K562 (cell line): ENCODE measurements at regions of chr5 and their contacts with region 1.

Region 1: DNA sequence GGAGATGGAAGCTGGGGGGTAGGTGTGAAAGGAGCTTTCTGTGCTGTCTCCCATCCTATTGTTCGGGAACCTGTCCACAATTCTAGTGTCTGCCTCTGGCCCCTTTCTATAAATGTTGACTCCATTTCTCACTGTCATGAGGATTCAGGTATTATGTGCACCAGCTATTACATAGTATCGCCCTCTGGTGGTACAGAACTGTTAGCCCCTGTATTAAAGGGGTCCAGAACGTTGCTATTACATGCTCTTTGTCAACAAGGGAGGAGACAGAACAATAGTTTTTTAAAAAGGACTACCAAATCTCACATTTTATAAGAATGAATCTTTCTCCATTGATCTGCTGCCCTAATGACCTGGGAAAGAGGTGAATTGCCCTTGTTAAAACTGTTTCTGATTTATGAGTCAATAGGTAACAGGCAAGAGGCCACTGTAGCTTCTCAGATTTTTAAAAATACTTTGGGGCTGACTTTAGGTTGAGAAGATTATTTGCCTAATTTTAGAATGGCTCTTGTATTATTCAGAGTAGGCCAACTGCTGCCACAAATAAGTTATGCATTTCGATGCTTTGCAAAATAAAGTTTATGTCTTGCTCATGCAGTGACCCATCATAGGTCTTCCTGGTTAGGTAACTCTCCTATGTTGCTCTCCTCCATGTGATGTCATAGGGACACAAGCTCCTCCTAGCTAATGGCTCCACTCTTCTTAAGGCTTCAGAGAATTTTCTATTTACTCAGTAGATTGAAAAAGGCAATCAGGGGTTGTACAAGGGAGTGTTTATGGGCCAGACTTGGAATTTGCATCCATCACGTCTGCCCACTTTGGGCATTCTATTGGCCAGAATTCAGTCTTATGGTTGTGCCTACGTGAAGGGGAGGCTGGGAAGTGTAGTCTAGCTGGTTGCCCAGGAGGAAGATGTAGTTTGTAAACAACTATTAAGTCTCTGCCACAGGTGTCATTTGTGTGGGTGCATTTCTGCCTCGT is 20.8 kb downstream of the DCANP1 start:
- DNase-seq: peak; percentile 59 to 73 (median 66)
- ATAC-seq: peak; percentile 99
- H3K4me3 ChIP-seq: no peak overlapping the region
- H3K27ac ChIP-seq: no peak overlapping the region
- H3K4me1 ChIP-seq: peaks cover 0 to 11% of the 10 kb centered on the region in 2 experiments; a peak in 3 of 5 replicates
- H3K27me3 ChIP-seq: no peaks in the 10 kb centered on the region
- CTCF ChIP-seq: peak; percentile 62 to 86 (median 81)
- EP300 ChIP-seq: no peak
- POLR2A ChIP-seq: no peak
- RAD21 ChIP-seq: peak; percentile 63 to 84

Region 2: DNA sequence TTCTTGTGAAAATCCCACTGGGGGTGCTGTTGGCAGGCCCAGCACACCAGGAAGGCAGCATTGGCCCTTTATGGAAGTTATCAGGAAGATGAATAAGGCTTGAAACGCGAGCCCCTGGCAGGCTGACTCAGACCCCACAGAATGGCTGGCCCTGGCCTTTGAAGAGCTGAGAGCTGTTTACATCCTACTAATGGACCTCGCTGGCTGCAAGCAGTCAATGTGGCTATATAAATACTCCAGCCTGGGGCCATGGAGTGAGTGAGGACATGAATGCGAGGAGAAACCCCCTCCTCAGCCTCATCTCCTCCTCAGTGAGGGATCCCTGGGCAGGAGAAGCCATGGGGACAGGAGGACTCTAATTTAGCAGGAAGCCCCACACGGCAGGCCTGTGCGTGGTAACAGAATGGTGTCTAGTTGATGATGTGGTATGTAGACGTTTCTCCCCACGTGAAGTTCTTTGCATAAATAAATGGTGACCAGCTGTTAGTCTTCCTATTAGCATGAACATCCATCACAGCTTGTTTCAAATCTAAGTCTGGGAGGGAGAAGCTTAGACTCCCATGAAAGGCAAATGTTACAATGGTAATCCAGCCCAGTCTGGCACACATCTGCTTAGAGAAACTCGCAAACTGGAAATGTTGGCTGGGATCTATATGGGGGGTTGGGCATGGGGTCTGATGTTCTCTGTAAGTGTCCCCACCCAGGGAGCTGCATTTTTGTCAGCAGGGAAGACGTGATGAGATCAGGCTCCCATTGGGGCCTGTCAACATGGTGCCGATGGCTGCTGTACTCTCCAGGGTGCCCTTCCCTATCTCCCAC is 217.3 kb before region 1 on chr5:
- CTCF ChIA-PET with region 1: no interaction called
- POLR2A ChIA-PET with region 1: no interaction called
- in situ Hi-C with region 1: no loop called
- intact Hi-C with region 1: loop called (anchors 10 kb)
- DNase-seq: peak in 1 of 4 experiments; percentile 16
- ATAC-seq: no peak
- H3K4me3 ChIP-seq: no peak overlapping the region
- H3K27ac ChIP-seq: no peak overlapping the region
- H3K4me1 ChIP-seq: peaks cover 4 to 21% of the 10 kb centered on the region in 2 experiments; a peak in 4 of 5 replicates
- H3K27me3 ChIP-seq: peaks cover 0 to 10% of the 10 kb centered on the region in 2 experiments; a peak in 2 of 5 replicates
- CTCF ChIP-seq: no peak
- EP300 ChIP-seq: no peak
- POLR2A ChIP-seq: no peak
- RAD21 ChIP-seq: no peak

Region 3: DNA sequence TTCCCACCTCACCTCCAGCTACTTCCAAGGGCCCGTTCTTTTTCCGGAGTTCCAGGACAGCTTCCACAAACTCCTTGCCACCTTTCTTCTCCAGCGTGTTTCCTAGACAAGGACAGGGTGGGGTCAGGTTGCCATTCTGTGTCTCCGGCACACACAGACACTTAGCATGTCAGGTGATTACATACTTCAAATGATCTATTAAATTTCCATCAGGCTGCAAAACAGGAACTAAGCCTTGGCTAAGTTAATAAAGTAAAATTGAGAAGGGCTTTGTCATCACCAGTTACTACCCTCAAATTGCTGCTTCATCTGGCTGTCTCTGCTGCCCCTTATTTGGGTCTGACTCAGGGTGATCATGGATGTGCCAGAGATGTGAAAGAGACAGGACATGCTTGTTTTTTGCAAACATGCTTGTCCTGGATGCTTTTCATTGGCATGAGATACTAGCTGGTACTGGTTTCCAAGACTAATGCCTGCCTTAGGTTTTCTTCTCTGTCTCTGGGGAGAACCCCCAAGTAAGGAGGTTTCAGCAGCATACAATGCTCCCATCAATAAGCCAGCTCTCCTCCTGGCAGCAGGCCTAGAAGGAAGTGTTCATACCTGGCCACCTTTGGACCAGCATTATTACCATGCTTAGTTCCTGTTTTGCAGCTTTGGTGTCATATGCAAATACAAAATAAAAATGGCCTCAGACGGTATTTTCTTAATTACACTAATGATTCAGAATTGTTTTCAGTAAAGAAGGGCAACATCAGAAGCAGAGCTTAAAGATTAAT is 80.2 kb before region 1 on chr5:
- CTCF ChIA-PET with region 1: no interaction called
- POLR2A ChIA-PET with region 1: interaction called, 3 read pairs
- in situ Hi-C with region 1: no loop called
- intact Hi-C with region 1: loop called (anchors 5 kb)
- DNase-seq: no peak
- ATAC-seq: no peak
- H3K4me3 ChIP-seq: no peak overlapping the region
- H3K27ac ChIP-seq: no peak overlapping the region
- H3K4me1 ChIP-seq: no peaks in the 10 kb centered on the region
- H3K27me3 ChIP-seq: no peaks in the 10 kb centered on the region
- CTCF ChIP-seq: no peak
- EP300 ChIP-seq: no peak
- POLR2A ChIP-seq: no peak
- RAD21 ChIP-seq: no peak

Region 4: DNA sequence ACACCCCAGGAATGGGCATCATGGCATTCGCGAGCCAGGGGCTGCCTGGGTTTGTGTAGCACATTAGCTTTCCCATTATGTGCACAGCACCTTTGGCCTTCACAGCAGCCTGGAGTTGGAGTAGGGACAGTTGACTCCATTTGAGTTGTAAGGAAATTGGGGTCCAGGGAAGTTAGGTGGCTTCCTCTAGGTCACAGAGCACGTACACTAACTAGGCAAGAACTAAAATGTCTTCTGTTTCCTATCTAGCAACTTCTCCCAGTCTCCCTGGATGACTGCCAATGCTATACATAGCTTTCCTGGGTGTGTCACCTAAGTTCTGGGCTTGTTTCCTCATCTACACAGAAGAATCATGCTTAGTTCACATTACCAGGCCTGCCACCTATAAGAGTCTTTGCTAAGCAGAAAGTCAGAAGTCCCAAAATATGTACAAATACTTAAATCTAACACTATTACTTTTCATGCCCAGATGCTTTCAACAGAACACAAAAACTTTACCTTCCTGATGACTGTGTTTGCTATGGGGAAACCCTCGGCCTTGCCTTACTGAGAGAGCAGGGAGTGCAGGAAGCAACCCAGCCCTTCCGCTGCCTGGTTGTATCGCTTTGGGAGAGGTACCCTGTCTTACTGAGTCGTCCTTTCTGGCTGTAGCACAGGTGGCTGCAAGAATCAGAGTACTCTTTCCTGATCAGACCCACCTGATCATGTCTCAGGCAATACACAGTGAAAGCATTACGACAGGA is 39.3 kb before region 1 on chr5:
- CTCF ChIA-PET with region 1: no interaction called
- POLR2A ChIA-PET with region 1: no interaction called
- in situ Hi-C with region 1: no loop called
- intact Hi-C with region 1: loop called (anchors 5 kb)
- DNase-seq: peak; percentile 35 to 92 (median 63)
- ATAC-seq: peak; percentile 84
- H3K4me3 ChIP-seq: no peak overlapping the region
- H3K27ac ChIP-seq: peak overlapping the region; percentile 71
- H3K4me1 ChIP-seq: peaks cover 25 to 42% of the 10 kb centered on the region in 2 experiments; a peak in 4 of 5 replicates
- H3K27me3 ChIP-seq: no peaks in the 10 kb centered on the region
- CTCF ChIP-seq: no peak
- EP300 ChIP-seq: no peak
- POLR2A ChIP-seq: no peak
- RAD21 ChIP-seq: no peak